Right ventricle myocardium inferior (tissue), 1 donor: ENCODE measurements at regions of chr1 and their contacts with region 1.

Region 1: GRCh38 chr1:88877382-88877825 is 14.0 kb downstream of the GTF2B start:
- DNase-seq: no peak
- ATAC-seq: no peak

Region 2: DNA sequence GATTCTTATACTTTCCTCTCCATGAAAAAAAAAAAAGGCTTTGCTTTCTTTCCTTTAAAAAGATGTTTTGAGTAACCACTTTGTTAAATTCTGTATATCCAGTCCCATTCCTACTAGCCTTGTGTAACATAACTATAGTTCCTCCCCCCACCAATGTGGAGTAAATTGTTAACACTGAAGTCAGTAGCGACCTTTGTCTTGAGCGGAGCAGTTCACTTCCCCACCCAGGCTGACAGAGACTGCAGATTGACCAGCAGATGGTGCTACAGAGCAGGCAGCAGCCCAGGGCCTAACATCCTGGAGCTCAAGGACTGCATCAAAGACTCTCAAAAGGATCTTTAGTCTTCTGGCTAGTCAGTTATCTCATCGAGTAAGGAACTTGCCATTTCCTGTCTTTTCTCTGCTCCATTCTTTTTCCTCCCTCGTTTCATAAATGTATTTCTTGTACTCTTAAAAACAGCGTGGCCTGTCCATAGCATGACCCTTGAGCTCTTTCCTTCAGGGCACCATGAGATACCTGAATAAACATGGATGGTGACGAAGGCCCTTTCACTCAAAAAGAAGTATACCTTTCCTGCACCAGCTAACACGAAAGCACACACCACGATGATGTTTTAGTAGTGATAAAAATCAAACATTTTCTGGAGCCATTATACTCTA is 696.8 kb before region 1 on chr1:
- intact Hi-C with region 1: loop called (anchors 5 kb)
- DNase-seq: peak; percentile 69
- ATAC-seq: peak; percentile 91

Region 3: DNA sequence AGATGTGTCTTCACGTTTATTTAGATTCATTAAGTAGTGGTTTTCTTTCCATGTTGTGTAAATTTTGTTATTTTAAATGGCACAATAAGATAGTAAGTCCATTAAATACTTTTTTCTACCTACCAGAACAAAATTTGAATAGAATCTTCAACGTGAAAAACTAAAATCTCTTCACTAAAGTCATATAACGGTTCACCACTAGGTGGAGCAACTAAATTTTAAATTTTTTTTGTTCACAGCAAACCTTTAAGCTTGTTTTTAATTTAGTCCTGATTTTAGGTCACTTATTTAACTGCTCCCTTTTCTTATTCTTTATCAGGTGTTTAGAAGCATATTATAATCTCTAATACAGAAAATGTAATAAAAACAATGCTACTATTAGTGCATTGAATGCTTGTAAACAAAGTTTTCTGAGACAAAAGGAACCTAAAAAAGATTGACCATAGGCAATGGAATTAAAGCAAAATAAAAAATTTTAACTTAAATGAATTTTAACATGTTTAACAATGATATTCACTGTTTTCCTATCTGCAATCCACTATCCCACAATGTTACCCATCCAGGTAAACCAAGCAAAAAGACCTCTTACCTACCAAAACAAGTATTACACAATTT is 221.6 kb before region 1 on chr1:
- intact Hi-C with region 1: loop called (anchors 5 kb)
- DNase-seq: no peak
- ATAC-seq: no peak

Region 4: DNA sequence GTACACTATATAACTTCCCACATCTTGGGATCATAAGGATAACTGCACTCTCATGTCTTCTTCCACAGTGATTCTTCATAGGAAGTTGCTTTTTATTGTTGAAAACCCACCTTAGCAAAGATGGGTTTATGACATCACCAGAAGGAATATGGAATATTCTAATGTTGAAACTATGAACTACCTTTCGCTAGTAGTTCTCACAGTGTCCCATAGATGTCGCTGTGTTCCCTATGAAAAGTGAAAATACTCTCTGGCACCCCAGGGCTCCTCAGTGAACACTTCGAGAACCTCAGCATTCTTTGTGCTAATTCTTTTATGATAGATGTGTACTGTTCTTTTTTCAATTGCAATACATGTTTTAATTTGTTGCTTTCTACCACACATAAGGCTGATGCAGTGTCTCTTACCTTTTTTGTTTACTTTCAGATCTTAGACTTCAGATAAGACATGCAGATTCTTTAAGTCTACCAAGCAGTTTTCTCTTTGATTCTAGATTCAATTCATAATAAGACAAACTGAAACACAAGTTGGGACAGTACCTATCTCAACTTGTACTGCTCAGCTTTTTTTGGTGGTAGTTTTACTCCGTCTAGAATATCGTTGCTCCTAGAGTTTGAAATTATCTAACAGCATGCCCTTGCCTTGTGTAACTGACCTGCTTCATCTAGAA is 76.9 kb before region 1 on chr1:
- intact Hi-C with region 1: loop called (anchors 5 kb)
- DNase-seq: no peak
- ATAC-seq: no peak